Activated CD8-positive, alpha-beta T cell treated with anti-CD3 and anti-CD28 coated beads for 36 hours (primary cell): ENCODE measurements at regions of chr1 and their contacts with region 1.

Region 1: DNA sequence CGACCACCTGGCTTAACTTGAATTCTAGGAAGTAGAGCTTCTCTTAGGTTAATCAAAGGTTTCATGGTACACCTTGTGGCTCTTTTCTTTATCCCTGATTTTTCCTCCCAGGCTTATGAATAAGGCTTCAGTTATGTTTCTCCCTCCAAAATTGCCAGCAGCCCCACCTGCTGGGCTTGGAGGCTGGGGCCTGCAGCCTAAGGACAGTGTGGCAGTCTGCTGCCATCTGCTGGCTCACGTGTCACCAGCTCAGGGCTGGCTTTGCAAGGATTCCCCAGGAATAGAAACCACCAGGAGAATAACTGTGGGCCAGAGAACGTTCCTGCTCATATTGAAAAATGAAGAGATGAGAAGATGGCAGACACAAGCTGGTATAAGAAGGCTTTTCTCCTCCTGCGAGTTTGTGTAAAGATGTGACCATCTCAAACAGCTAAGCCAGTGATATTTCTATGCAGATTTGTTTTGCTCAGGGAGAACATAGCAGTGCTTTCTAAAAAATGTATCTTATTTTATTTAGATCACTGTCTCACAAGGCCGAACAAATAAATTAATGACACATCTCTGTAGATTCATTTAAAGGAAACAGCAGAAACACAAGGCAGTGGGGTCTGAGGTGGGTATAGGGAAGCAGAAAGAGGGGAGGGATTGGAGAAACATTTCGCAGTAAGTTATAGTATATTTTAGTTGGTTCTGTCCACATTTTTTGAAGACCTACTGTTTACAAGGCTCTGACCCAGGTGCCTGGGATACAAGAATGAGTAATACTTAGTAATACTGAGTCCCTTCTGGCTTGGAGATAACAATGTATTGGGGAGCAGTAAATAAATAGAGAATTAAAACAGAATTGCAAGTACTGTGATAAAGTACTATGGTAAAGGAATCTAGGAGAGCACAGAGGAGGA is 291.1 kb upstream of the SGIP1 start:
- DNase-seq: peak; percentile 84
- ATAC-seq: peak; percentile 61
- H3K4me3 Mint-ChIP-seq: no peak overlapping the region
- H3K27ac Mint-ChIP-seq: no peak overlapping the region
- H3K4me1 Mint-ChIP-seq: peaks cover 21% of the 10 kb centered on the region
- H3K27me3 Mint-ChIP-seq: peaks cover 6% of the 10 kb centered on the region
- CTCF ChIP-seq: peak; percentile 99

Region 2: DNA sequence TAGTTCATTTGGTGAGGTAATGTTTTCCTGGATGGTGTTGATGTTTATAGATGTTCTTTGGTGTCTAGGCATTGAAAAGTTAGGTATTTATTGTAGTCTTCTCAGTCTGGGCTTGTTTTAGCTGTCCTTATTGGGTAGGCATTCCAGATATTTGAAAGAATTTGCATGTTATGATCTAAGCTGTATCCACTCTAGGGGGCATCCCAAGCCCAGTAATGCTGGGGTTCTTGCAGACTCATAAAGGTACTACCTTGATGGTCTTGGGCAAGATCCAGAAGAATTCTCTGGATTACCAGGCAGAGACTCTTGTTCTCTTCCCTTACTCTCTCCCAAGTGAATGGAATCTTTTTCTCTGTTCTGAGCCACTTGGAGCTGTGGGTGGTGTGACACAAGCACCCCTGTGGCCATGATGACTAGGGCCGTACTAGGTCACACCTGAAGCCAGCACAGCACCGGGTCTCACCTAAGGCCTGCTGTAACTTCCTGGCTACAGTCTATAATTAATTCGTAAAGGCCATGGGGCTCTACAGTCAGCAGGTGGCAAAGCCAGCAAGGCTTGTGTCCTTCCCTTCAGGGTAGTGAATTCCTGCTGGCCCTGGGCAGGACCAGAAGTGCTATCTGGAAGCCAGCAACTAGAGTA is 525.0 kb before region 1 on chr1:
- CTCF ChIA-PET with region 1: interaction called, 13 read pairs
- POLR2A ChIA-PET with region 1: no interaction called
- intact Hi-C with region 1: no loop called
- DNase-seq: peak; percentile 34
- ATAC-seq: no peak
- H3K4me3 Mint-ChIP-seq: no peak overlapping the region
- H3K27ac Mint-ChIP-seq: no peak overlapping the region
- H3K4me1 Mint-ChIP-seq: no peaks in the 10 kb centered on the region
- H3K27me3 Mint-ChIP-seq: peaks cover 9% of the 10 kb centered on the region
- CTCF ChIP-seq: no peak

Region 3: DNA sequence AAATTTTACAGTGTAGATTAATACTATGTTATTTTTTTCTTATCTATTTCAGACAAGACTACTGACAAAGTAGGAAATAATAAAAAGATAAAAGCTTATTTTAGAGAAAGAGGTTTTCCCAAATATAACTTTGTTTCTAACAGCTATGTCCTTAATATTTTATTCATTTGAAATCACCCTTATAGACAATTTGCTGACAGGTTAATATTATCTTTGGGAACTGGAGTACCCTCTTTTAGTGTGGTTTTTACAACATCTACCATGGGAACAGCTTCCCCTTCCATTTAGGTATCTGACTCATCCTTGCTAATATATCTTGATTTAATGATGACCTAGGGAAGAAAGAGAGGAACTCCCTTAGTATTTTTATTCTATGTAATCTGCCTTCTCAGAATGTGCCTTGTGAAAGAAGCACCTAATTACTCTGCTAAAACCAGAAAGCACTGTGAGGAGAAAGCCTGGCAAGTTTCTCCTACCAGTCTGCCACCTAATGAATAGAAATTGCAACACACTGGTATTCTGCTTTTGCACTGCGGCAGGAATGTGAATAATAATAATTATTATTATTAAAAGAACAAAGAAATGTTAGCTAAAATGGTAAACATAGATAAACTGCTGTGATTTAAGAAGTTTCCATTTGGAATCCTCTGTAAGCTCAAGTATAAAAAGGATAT is 257.4 kb before region 1 on chr1:
- CTCF ChIA-PET with region 1: interaction called, 16 read pairs
- POLR2A ChIA-PET with region 1: no interaction called
- intact Hi-C with region 1: no loop called
- DNase-seq: no peak
- ATAC-seq: no peak
- H3K4me3 Mint-ChIP-seq: no peak overlapping the region
- H3K27ac Mint-ChIP-seq: no peak overlapping the region
- H3K4me1 Mint-ChIP-seq: no peaks in the 10 kb centered on the region
- H3K27me3 Mint-ChIP-seq: peaks cover 4% of the 10 kb centered on the region
- CTCF ChIP-seq: no peak

Region 4: DNA sequence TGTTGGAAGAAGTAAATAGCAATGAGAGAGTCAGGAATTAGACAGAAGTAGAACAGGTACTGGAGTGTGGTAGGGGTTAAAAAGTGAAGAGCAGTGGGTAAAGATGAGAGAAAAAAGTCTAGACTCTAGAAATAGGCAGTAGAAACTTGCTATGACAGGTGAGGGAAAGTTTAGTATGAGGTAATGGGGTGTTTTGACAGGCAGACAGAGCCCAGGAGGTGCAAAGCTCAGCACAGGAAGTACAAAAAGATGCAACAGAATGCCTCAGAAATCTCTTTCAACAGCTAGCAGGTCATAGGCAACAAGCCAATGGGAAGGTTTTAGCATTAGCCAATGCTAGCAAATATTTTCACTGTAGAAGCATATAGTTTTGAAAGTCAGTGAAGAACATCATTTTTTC is 28.0 kb before region 1 on chr1:
- CTCF ChIA-PET with region 1: interaction called, 11 read pairs
- POLR2A ChIA-PET with region 1: no interaction called
- intact Hi-C with region 1: no loop called
- DNase-seq: peak; percentile 22
- ATAC-seq: peak; percentile 89
- H3K4me3 Mint-ChIP-seq: no peak overlapping the region
- H3K27ac Mint-ChIP-seq: peak overlapping the region; percentile 19
- H3K4me1 Mint-ChIP-seq: peaks cover 9% of the 10 kb centered on the region
- H3K27me3 Mint-ChIP-seq: no peaks in the 10 kb centered on the region
- CTCF ChIP-seq: no peak

Region 5: GRCh38 chr1:66271216-66271903 is 28.5 kb after region 1 on chr1:
- CTCF ChIA-PET with region 1: interaction called, 10 read pairs
- POLR2A ChIA-PET with region 1: interaction called, 5 read pairs
- intact Hi-C with region 1: no loop called
- DNase-seq: peak; percentile 80
- ATAC-seq: peak; percentile 63
- H3K4me3 Mint-ChIP-seq: no peak overlapping the region
- H3K27ac Mint-ChIP-seq: peak overlapping the region; percentile 86
- H3K4me1 Mint-ChIP-seq: peaks cover 65% of the 10 kb centered on the region
- H3K27me3 Mint-ChIP-seq: no peaks in the 10 kb centered on the region
- CTCF ChIP-seq: no peak

Region 6: DNA sequence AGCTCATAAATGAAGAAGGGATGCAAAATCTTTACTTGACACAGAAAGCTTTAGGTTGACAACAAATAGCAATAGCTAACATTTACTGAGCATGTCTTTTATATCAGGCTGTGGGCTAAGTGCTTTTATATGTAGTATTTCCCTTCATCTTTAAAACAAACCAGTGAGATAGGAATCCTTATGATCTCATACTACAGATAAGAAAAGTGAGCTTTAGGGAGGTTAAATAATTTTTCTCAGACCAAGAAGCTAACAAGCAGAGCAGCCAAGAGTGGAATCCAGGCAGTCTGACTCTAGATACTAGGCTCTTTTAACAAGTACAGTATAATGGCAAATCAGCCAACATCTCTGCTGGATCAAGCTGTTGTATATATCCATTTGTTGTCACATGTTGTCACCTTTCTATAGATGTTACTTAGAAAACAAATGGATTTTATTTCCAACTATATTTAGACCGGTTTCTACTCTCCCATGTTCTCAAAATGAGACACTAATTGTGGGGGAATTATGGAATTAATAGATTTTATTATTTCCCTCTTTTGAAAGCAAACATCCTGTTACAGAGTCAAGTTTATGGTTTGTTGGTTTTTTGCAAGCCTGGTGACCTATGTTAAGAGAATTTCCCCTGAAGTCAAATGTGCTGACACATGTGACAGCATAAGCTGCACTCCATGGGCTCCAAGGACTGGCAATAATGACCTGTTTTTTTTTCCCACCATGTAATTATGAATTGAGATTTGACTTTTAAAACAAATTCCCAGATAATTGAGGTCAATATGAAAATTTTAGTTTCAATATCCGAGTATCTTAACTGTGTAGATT is 48.4 kb after region 1 on chr1:
- CTCF ChIA-PET with region 1: no interaction called
- POLR2A ChIA-PET with region 1: no interaction called
- intact Hi-C with region 1: no loop called
- DNase-seq: no peak
- ATAC-seq: no peak
- H3K4me3 Mint-ChIP-seq: no peak overlapping the region
- H3K27ac Mint-ChIP-seq: no peak overlapping the region
- H3K4me1 Mint-ChIP-seq: peaks cover 61% of the 10 kb centered on the region
- H3K27me3 Mint-ChIP-seq: no peaks in the 10 kb centered on the region
- CTCF ChIP-seq: no peak

Region 7: GRCh38 chr1:66436378-66437145 is 193.7 kb after region 1 on chr1:
- CTCF ChIA-PET with region 1: interaction called, 512 read pairs
- POLR2A ChIA-PET with region 1: interaction called, 8 read pairs
- intact Hi-C with region 1: no loop called
- DNase-seq: peak; percentile 87
- ATAC-seq: peak; percentile 95
- H3K4me3 Mint-ChIP-seq: no peak overlapping the region
- H3K27ac Mint-ChIP-seq: peak overlapping the region; percentile 52
- H3K4me1 Mint-ChIP-seq: peaks cover 41% of the 10 kb centered on the region
- H3K27me3 Mint-ChIP-seq: no peaks in the 10 kb centered on the region
- CTCF ChIP-seq: peak; percentile 81